Activated naive CD4-positive, alpha-beta T cell treated with anti-CD3 and anti-CD28 coated beads, Interleukin-2, amount 10 ng/mL, durations not matched to agents 7 days and 5 days (primary cell): ENCODE measurements at regions of chr2 and their contacts with region 1.

Region 1: GRCh38 chr2:101252408-101253012 is at the start of gene CNOT11:
- DNase-seq: peak; percentile 99
- H3K4me3 Mint-ChIP-seq: peak within 1 kb of the TSS; percentile 94
- H3K27ac Mint-ChIP-seq: peak within 1 kb of the TSS; percentile 96
- H3K4me1 Mint-ChIP-seq: peaks cover 50% of the 10 kb centered on the region
- H3K27me3 Mint-ChIP-seq: no peaks in the 10 kb centered on the region

Region 2: GRCh38 chr2:101223814-101224231 is 28.7 kb before region 1 on chr2:
- CTCF ChIA-PET with region 1: no interaction called
- DNase-seq: peak; percentile 71
- H3K4me3 Mint-ChIP-seq: no peak overlapping the region
- H3K27ac Mint-ChIP-seq: peak overlapping the region; percentile 84
- H3K4me1 Mint-ChIP-seq: peaks cover 28% of the 10 kb centered on the region
- H3K27me3 Mint-ChIP-seq: no peaks in the 10 kb centered on the region

Region 3: GRCh38 chr2:101238930-101239759 is 13.4 kb before region 1 on chr2:
- CTCF ChIA-PET with region 1: interaction called, 13 read pairs
- DNase-seq: no peak
- H3K4me3 Mint-ChIP-seq: no peak overlapping the region
- H3K27ac Mint-ChIP-seq: no peak overlapping the region
- H3K4me1 Mint-ChIP-seq: peaks cover 10% of the 10 kb centered on the region
- H3K27me3 Mint-ChIP-seq: peaks cover 4% of the 10 kb centered on the region